T-cell (primary cell): ENCODE measurements at regions of chr17 and their contacts with region 1.

Region 1: DNA sequence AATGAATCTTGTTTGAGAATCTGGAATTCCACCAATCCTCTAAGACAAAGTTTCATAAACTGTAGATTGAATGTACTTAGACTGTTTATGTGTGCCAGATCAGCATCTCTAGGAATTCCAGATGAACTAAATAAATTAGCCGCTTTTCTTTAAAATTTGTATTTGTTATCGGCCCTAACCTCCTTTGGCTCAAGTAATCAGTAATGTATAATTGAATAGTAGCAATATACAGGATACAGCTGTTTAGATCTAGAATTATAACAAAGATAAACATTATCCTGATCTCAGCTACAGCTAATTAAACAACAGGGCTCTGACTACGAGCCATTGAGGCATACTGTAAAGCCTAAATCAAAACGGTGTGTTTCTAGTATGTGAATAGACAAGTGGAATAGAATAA is 120.3 kb downstream of the CYB561 start:
- DNase-seq: no peak
- ATAC-seq: no peak
- H3K4me3 ChIP-seq: no peak overlapping the region
- H3K4me3 Mint-ChIP-seq: no peak overlapping the region
- H3K27ac ChIP-seq: no peak overlapping the region
- H3K27ac Mint-ChIP-seq: no peak overlapping the region
- H3K4me1 ChIP-seq: no peaks in the 10 kb centered on the region
- H3K4me1 Mint-ChIP-seq: no peaks in the 10 kb centered on the region
- H3K27me3 ChIP-seq: no peaks in the 10 kb centered on the region
- H3K27me3 Mint-ChIP-seq: no peaks in the 10 kb centered on the region

Region 2: GRCh38 chr17:63293323-63294075 is 32.3 kb before region 1 on chr17:
- CTCF ChIA-PET with region 1: no interaction called
- POLR2A ChIA-PET with region 1: interaction called in 1 of 2 experiments, 12 read pairs
- DNase-seq: no peak
- ATAC-seq: no peak
- H3K4me3 ChIP-seq: no peak overlapping the region
- H3K4me3 Mint-ChIP-seq: no peak overlapping the region
- H3K27ac ChIP-seq: no peak overlapping the region
- H3K27ac Mint-ChIP-seq: no peak overlapping the region
- H3K4me1 ChIP-seq: no peaks in the 10 kb centered on the region
- H3K4me1 Mint-ChIP-seq: peaks cover 2 to 8% (median 6%) of the 10 kb centered on the region in 3 donors
- H3K27me3 ChIP-seq: no peaks in the 10 kb centered on the region
- H3K27me3 Mint-ChIP-seq: no peaks in the 10 kb centered on the region